ENCODE measurements at regions of chr15 and their contacts with region 1.

Region 1: DNA sequence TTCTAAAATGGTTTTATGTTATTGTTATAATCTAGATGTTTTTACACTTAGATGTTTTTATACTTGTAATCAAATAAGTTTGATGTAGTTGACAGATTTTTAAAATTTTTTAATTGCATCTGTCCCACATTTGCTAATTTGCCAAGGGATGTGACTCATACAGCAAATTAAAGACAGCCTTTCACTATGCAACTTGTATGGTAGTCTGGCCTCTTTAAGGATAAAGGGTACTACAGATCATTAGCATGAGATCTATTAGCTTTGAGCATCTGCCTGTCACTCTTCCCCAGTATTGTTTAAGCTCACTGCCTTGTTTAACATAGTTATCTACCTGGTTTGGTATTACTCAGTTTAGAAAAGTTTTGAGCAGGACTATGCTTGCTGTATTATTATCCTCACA is 83.0 kb downstream of the NPTN start:
- DNase-seq: no peak
- H3K4me3 ChIP-seq: no peak overlapping the region
- CTCF ChIP-seq: no peak
- POLR2A ChIP-seq: no peak

Region 2: GRCh38 chr15:73677146-73677607 is 127.0 kb after region 1 on chr15:
- intact Hi-C with region 1: no loop called
- DNase-seq: peak; percentile 72 to 87
- H3K4me3 ChIP-seq: no peak overlapping the region
- CTCF ChIP-seq: peak in 1 of 3 donors; percentile 79
- POLR2A ChIP-seq: no peak

Region 3: GRCh38 chr15:73908030-73908821 is 358.0 kb after region 1 on chr15:
- intact Hi-C with region 1: loop called (anchors 10 kb)
- DNase-seq: peak; percentile 68 to 96
- H3K4me3 ChIP-seq: no peak overlapping the region
- CTCF ChIP-seq: peak in 1 of 3 donors; percentile 58
- POLR2A ChIP-seq: no peak